T-cell (primary cell): ENCODE measurements at regions of chr1 and their contacts with region 1.

Region 1: GRCh38 chr1:180560868-180561600 is 2.3 kb downstream of the OVAAL start:
- DNase-seq: no peak
- ATAC-seq: no peak
- H3K4me3 ChIP-seq: no peak overlapping the region
- H3K4me3 Mint-ChIP-seq: no peak overlapping the region
- H3K27ac ChIP-seq: no peak overlapping the region
- H3K27ac Mint-ChIP-seq: no peak overlapping the region
- H3K4me1 ChIP-seq: no peaks in the 10 kb centered on the region
- H3K4me1 Mint-ChIP-seq: no peaks in the 10 kb centered on the region
- H3K27me3 ChIP-seq: no peaks in the 10 kb centered on the region
- H3K27me3 Mint-ChIP-seq: peaks cover 0 to 9% of the 10 kb centered on the region in 2 donors

Region 2: DNA sequence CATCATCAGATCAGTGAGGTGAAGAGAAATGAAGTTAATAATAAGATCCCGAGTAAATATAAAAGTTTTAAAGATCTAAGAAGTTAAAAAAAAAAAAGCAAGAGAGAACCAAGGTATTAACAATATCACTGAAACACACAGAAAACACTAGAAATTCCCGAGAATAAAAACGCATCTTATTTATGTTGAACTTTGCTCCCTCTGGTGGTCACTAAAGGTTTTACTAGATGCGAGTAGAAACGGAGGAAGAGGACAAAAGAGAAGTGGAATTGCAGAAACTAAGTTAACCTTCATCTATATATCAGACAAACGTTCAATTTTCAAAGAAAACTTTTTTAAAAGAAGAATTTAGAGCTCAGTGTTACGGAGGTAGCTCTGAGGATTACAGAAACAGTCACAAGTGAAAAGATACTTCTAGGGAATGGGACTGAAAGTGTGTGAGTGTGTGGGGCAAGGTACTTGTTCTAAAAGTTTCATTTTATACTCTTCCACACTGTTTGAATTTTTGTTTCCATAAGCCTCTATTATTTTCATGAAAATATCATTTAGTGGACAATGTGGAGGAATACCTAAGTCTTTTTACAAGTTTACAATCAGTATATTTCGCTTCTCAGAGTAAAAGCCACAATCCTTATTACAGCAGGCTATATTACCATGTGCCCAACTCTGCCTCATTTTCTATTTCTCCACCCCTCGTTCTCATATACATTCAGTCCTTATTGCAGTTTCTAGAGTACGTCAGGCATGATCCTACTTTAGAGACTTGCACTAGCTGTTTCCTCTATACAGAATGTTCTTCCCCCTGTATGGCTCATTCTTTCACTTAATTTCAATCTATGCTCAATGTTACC is 78.4 kb before region 1 on chr1:
- CTCF ChIA-PET with region 1: no interaction called
- POLR2A ChIA-PET with region 1: no interaction called
- DNase-seq: peak in 3 of 35 experiments; percentile 15 to 69 (median 15)
- ATAC-seq: peak in 3 of 4 experiments; percentile 35 to 52 (median 51)
- H3K4me3 ChIP-seq: no peak overlapping the region
- H3K4me3 Mint-ChIP-seq: no peak overlapping the region
- H3K27ac ChIP-seq: no peak overlapping the region
- H3K27ac Mint-ChIP-seq: no peak overlapping the region
- H3K4me1 ChIP-seq: no peaks in the 10 kb centered on the region
- H3K4me1 Mint-ChIP-seq: peaks cover 13 to 34% (median 20%) of the 10 kb centered on the region in 3 donors
- H3K27me3 ChIP-seq: no peaks in the 10 kb centered on the region
- H3K27me3 Mint-ChIP-seq: no peaks in the 10 kb centered on the region

Region 3: DNA sequence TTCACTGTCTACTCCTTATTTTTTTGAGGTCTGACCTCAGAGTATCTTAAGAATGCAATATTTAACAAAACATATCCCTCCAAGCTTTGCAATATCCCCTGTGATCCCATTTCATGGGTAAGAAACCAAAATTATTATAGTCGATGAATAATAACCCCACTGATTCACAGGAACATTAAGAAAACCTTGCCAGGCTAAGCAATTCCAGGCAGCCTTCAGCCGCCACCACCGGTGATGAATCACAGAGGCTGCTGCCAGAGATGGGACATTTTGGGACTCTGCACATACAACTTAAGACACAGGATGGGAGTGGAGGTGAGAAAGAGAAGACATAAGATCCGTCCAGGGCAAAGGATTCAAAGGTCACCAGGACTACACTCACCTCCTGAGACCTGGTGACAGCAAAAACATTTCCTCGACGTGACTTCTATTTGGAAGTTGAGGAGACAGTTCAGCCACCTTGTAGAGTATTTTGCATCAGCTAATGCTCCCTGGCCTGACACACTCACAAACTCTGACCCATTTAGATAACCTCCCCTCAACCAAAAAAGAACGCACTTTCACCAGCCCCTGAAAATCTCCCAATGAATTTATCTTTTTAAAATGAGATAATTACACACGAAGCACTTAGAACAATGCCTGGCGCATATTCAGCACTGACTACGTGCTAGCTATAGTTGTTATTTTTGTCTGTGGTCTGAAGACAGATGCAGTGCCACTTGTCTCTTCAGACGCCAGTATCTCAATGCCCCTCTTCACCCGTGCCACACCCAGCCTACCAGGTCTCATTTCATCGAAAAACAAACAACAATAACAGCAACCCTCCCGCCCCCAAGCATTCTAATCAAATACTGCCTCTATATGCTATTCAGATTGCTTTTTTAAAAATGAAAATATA is 20.1 kb before region 1 on chr1:
- CTCF ChIA-PET with region 1: no interaction called
- POLR2A ChIA-PET with region 1: no interaction called
- DNase-seq: no peak
- ATAC-seq: no peak
- H3K4me3 ChIP-seq: no peak overlapping the region
- H3K4me3 Mint-ChIP-seq: no peak overlapping the region
- H3K27ac ChIP-seq: no peak overlapping the region
- H3K27ac Mint-ChIP-seq: no peak overlapping the region
- H3K4me1 ChIP-seq: no peaks in the 10 kb centered on the region
- H3K4me1 Mint-ChIP-seq: no peaks in the 10 kb centered on the region
- H3K27me3 ChIP-seq: peaks cover 0 to 6% of the 10 kb centered on the region in 2 experiments
- H3K27me3 Mint-ChIP-seq: peaks cover 0 to 8% of the 10 kb centered on the region in 2 donors

Region 4: GRCh38 chr1:180926164-180926981 is 365.3 kb after region 1 on chr1:
- CTCF ChIA-PET with region 1: no interaction called
- POLR2A ChIA-PET with region 1: interaction called in 1 of 2 experiments, 10 read pairs
- DNase-seq: peak in 2 of 35 experiments; percentile 2 to 14
- ATAC-seq: peak; percentile 44 to 57 (median 50)
- H3K4me3 ChIP-seq: peak overlapping the region in 1 of 2 donors; percentile 21
- H3K4me3 Mint-ChIP-seq: no peak overlapping the region
- H3K27ac ChIP-seq: no peak overlapping the region
- H3K27ac Mint-ChIP-seq: no peak overlapping the region
- H3K4me1 ChIP-seq: peaks cover 3 to 5% of the 10 kb centered on the region in 2 experiments
- H3K4me1 Mint-ChIP-seq: peaks cover 0 to 8% (median 3%) of the 10 kb centered on the region in 3 donors
- H3K27me3 ChIP-seq: peaks cover 0 to 30% of the 10 kb centered on the region in 2 experiments
- H3K27me3 Mint-ChIP-seq: peaks cover 0 to 8% of the 10 kb centered on the region in 2 donors